BJ (cell line): ENCODE measurements at regions of chr1 and their contacts with region 1.

Region 1: DNA sequence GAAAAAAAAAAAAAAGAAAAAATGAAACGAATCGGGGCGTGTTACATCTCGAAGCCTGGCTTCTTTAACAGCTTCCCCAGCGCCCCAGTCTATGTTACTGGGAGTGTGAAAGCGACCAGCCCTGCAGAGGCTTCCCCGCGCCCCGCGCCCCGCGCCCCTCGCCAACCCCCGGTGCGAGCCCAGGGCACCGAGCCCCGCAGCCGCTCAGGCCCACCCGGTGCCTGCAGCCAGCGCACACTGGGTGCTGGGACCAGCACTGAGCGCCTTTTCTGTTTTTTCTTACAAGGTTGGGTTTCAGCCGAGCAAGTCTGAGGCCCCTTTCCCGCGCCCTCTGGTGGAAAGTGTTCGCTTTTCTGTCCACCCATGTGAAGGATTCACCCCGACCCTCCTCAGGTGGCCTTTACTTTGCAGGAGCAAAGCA is 42.1 kb upstream of the ZNF496 start:
- DNase-seq: no peak
- H3K4me3 ChIP-seq: peak overlapping the region; percentile 18
- H3K27me3 ChIP-seq: 0 out of 2 replicates have a peak, but pooled peaks cover 3% of the 10 kb centered on the region
- CTCF ChIP-seq: peak; percentile 61

Region 2: GRCh38 chr1:247360991-247361731 is 12.6 kb before region 1 on chr1:
- CTCF ChIA-PET with region 1: interaction called, 32 read pairs
- POLR2A ChIA-PET with region 1: no interaction called
- DNase-seq: no peak
- H3K4me3 ChIP-seq: no peak overlapping the region
- H3K27me3 ChIP-seq: no peaks in the 10 kb centered on the region
- CTCF ChIP-seq: no peak

Region 3: GRCh38 chr1:247390116-247390791 is 16.5 kb after region 1 on chr1:
- CTCF ChIA-PET with region 1: interaction called, 37 read pairs
- POLR2A ChIA-PET with region 1: no interaction called
- DNase-seq: no peak
- H3K4me3 ChIP-seq: peak overlapping the region; percentile 16; the same call in 1 of the 2 replicates
- H3K27me3 ChIP-seq: no peaks in the 10 kb centered on the region
- CTCF ChIP-seq: peak; percentile 93

Region 4: DNA sequence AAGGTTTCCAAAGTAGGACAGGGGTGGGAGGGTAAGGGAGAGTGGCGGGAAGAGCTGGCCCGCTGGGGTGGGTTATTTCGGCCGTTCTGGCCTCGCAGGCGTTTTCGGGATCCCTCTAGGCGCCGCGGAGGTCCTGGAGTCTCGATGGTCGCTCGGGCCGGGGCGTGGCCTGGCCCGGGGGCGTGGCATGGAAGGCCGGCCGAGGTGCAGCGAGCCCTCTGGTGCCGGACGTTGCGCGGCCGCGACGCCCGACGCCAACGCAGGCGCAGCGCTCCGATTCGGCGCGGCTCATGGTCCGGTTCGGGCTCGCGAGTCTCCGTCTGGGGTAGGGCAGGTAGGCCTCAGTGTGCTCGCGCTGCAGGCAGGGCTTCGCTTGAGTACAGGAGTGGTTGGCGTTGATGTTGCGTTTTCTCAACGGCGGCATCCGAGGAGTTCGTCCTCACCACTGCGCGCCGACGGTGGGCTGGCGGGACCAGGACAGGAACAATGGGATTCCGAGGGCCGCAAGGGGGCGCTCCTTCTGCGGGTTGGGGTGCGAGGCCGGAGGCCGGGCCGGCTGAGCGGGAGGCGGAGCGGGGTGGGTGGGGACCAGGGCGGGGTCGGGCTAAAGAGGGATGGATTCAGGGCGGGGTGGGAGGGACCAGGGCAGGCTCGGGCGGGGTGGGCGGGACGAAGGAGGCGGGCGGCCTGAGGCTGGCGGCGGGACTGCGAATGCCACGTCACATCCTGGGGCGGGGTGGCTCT is 1532.5 kb after region 1 on chr1 and contains the start of gene PGBD2:
- CTCF ChIA-PET with region 1: no interaction called
- POLR2A ChIA-PET with region 1: no interaction called
- DNase-seq: no peak
- H3K4me3 ChIP-seq: peak within 1 kb of the TSS; percentile 60
- H3K27me3 ChIP-seq: no peaks in the 10 kb centered on the region
- CTCF ChIP-seq: peak; percentile 89
- polyA plus RNA-seq, gene PGBD2: 3.8 and 4.2 TPM in 2 replicates